ENCODE measurements at regions of chr11 and their contacts with region 1.

Region 1: GRCh38 chr11:34537656-34538055 is 24.1 kb upstream of the ELF5 start:
- DNase-seq: no peak
- H3K4me3 ChIP-seq: no peak overlapping the region
- H3K27ac ChIP-seq: no peak overlapping the region
- H3K4me1 ChIP-seq: no peaks in the 10 kb centered on the region
- H3K27me3 ChIP-seq: no peaks in the 10 kb centered on the region
- CTCF ChIP-seq: no peak
- POLR2A ChIP-seq: no peak

Region 2: DNA sequence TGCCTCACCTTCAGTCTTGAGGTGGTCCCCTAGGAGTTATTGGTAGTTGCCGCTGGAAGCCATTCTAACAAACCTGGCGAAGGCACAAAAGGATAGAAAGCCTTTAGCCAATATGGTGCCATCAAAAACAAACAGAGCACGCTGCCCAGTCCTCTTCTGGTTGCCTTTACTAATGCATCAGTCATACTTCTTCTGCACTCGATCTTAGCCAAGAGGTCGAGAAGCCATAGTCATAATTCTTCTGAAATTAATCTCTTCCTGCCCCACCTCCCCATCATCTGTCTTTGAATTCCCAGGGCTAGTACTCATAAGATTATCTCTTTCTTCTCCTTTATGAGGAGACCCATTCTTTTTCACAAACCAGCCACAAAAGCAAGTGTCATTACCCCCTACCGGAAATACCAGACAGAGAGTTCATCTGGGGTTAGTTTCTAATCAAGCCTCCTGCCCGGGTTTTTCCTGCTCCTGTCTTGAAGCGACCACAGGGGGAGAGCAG is 61.8 kb after region 1 on chr11:
- intact Hi-C with region 1: loop called (anchors 2 kb)
- DNase-seq: no peak
- H3K4me3 ChIP-seq: no peak overlapping the region
- H3K27ac ChIP-seq: peak overlapping the region; percentile 10
- H3K4me1 ChIP-seq: peaks cover 17% of the 10 kb centered on the region
- H3K27me3 ChIP-seq: no peaks in the 10 kb centered on the region
- CTCF ChIP-seq: no peak
- POLR2A ChIP-seq: no peak

Measured in vagina (tissue), 2 donors.